ENCODE measurements at regions of chr6 and their contacts with region 1.

Region 1: GRCh38 chr6:32529697-32530429 is at the start of gene HLA-DRB5:
- DNase-seq: peak in 1 of 4 donors; percentile 63
- ATAC-seq: peak; percentile 98
- H3K4me3 ChIP-seq: peak within 1 kb of the TSS in 1 of 2 donors; percentile 46
- H3K27ac ChIP-seq: peak within 1 kb of the TSS in 1 of 2 donors; percentile 74
- H3K4me1 ChIP-seq: no peaks in the 10 kb centered on the region
- H3K27me3 ChIP-seq: no peaks in the 10 kb centered on the region
- CTCF ChIP-seq: no peak
- polyA plus RNA-seq, gene HLA-DRB5: 2.7 to 23.5 (median 6.1) TPM

Region 2: GRCh38 chr6:31784098-31784925 is 745.6 kb before region 1 on chr6:
- intact Hi-C with region 1: no loop called
- DNase-seq: peak in 1 of 4 donors; percentile 37
- ATAC-seq: no peak
- H3K4me3 ChIP-seq: no peak overlapping the region
- H3K27ac ChIP-seq: no peak overlapping the region
- H3K4me1 ChIP-seq: no peaks in the 10 kb centered on the region
- H3K27me3 ChIP-seq: no peaks in the 10 kb centered on the region
- CTCF ChIP-seq: no peak

Region 3: DNA sequence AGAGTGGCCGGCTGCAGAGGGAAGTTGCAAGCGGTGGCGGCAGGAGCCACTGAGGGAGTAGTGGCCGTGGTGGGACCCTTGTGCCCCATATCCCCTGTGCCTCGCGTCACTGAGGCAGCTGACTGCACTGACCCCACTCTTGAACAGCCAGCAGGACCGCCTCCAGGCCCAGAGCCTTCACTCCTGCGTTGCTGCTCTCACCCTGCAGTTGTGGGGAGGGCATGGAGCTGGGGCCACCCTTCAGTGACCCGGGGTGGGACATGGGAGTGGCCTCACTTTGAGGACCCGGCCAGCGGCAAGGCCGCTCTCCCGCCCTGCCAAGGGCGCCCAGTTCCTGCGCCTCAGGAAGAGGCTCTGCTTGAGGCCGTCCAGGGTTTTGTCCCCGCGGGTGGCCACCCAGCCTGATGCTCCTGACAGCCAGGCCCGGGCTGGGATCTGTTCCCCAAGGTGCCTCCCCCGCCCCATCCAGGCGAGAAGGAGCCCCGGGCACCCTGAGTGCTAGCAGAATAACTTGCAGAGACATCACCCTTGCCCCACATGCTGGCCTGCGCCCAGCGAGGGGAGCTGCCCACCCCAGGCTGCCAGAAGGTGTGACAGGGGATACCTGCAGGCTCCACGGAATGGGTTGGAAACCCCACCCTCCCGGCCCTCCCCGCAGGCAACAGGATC is 45.8 kb before region 1 on chr6:
- intact Hi-C with region 1: loop called in 1 of 2 experiments (anchors 10 kb)
- DNase-seq: peak in 1 of 4 donors; percentile 78
- ATAC-seq: no peak
- H3K4me3 ChIP-seq: no peak overlapping the region
- H3K27ac ChIP-seq: no peak overlapping the region
- H3K4me1 ChIP-seq: no peaks in the 10 kb centered on the region
- H3K27me3 ChIP-seq: no peaks in the 10 kb centered on the region
- CTCF ChIP-seq: no peak

Region 4: DNA sequence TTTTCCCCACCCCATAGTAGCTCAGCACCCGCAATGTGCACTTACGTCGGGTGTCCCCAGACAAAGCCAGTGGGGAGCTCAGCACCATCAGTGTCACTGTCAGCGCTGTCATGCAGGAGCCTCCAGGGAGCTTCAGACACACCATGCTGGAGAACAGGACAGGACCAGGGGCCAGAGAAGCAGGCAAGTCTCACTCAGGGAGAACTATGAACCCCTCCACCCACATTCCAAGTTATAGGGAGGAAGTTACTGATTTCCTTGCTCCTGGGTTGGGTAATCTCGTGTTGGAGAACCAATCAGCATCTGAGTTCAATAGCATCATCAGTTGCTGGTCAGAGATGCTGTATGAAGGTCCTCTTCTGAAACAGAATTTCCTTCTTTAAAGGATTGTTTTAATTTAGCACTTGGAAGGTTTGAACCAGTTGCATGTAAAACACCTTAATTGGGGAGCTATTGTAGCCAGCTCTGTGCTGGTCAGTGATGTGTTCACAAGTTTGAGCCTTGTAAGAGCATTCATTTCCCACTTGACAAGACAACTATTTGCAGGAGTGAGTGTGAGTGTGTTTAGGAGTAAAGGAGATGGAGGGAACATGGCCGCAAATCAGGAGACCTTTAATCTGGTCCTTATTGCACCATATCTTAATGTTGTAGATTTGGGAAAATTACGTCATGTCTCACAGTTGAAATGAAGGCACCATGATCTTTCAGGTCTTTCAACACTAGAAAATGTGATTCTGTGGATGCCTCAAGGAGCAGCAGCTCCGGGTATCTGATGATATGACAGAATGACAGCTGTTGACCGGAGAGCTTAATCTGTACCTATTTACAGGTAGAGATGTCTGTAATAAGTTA is 60.0 kb after region 1 on chr6 and contains the start of gene HLA-DRB1:
- intact Hi-C with region 1: loop called in 1 of 2 experiments (anchors 10 kb)
- DNase-seq: peak in 2 of 4 donors; percentile 23 to 58
- ATAC-seq: peak; percentile 98
- H3K4me3 ChIP-seq: peak within 1 kb of the TSS in 1 of 2 donors; percentile 50
- H3K27ac ChIP-seq: peak within 1 kb of the TSS; percentile 33 to 84
- H3K4me1 ChIP-seq: peaks cover 0 to 18% of the 10 kb centered on the region in 2 donors
- H3K27me3 ChIP-seq: peaks cover 0 to under 1% of the 10 kb centered on the region in 2 donors
- CTCF ChIP-seq: no peak
- polyA plus RNA-seq, gene HLA-DRB1: 11.2 to 36.2 (median 19.4) TPM

Region 5: GRCh38 chr6:33271458-33272274 is 741.8 kb after region 1 on chr6 and contains the starts of genes RPS18 and VPS52:
- intact Hi-C with region 1: no loop called
- DNase-seq: peak; percentile 91 to 98 (median 96)
- ATAC-seq: peak; percentile 92
- H3K4me3 ChIP-seq: peak within 1 kb of the TSS; percentile 69 to 87
- H3K27ac ChIP-seq: peak within 1 kb of the TSS; percentile 94 to 98
- H3K4me1 ChIP-seq: peaks cover 40 to 57% of the 10 kb centered on the region in 2 donors
- H3K27me3 ChIP-seq: no peaks in the 10 kb centered on the region
- CTCF ChIP-seq: no peak
- polyA plus RNA-seq, gene RPS18: 3,694 to 4,273 (median 4,148) TPM
- polyA plus RNA-seq, gene VPS52: 75.7 to 92.5 (median 86.3) TPM

Measured in left lung (tissue), 14 donors.